ENCODE measurements at regions of chr1 and their contacts with region 1.

Region 1: GRCh38 chr1:193176788-193177187 is 9.6 kb downstream of the B3GALT2 start:
- DNase-seq: no peak
- ATAC-seq: no peak
- H3K4me3 ChIP-seq: no peak overlapping the region
- H3K27ac ChIP-seq: no peak overlapping the region
- H3K4me1 ChIP-seq: no peaks in the 10 kb centered on the region
- H3K27me3 ChIP-seq: no peaks in the 10 kb centered on the region
- CTCF ChIP-seq: no peak

Region 2: GRCh38 chr1:193348091-193348768 is 171.4 kb after region 1 on chr1:
- CTCF ChIA-PET with region 1: no interaction called
- POLR2A ChIA-PET with region 1: interaction called, 11 read pairs
- in situ Hi-C with region 1: no loop called
- intact Hi-C with region 1: no loop called
- DNase-seq: no peak
- ATAC-seq: no peak
- H3K4me3 ChIP-seq: no peak overlapping the region
- H3K27ac ChIP-seq: no peak overlapping the region
- H3K4me1 ChIP-seq: no peaks in the 10 kb centered on the region
- H3K27me3 ChIP-seq: no peaks in the 10 kb centered on the region
- CTCF ChIP-seq: no peak

Measured in Panc1 (cell line).